CD8-positive, alpha-beta T cell (primary cell): ENCODE measurements at regions of chr1 and their contacts with region 1.

Region 1: DNA sequence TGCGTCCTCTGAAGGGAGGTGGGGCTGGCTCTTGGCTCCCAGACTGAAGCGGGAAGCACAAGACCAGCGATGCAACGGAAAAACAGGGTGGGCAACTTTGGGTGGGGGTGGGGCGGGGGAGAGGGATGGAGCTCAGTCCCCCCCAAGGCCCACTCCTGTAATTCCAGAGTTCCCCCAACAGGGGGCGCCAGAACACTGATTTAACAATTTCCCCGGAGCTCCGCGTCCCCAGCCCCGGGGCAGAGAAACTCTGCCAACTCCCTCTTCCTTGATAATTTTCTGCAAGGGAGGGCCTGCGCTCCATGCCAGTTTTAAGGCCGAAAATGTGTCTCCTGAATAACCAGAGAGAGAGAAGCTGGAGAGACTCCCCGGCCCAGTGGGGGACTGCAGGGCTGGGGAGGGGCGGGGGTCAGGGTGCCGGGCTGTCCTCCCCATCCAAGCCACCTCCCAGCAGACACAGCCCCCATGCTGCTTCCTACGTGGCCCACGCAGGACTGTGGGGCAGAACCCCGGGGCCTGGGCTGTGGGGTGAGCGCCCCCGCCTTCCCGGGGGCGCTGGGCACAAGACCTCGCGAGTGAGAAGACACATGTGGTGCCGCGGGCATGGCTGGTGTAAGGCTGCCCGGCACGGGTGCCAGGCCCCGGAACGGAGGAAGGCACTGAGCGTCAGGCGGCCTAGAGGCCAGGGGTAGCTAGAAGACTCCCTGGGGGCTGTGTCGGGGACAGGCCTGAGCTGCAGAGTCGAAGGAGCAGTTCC is 51.4 kb downstream of the KIF21B start:
- DNase-seq: peak; percentile 49 to 83 (median 66)
- ATAC-seq: peak; percentile 67
- H3K4me3 ChIP-seq: no peak overlapping the region
- H3K4me3 Mint-ChIP-seq: no peak overlapping the region
- H3K27ac ChIP-seq: no peak overlapping the region
- H3K27ac Mint-ChIP-seq: no peak overlapping the region
- H3K4me1 ChIP-seq: no peaks in the 10 kb centered on the region
- H3K4me1 Mint-ChIP-seq: no peaks in the 10 kb centered on the region
- H3K27me3 ChIP-seq: no peaks in the 10 kb centered on the region
- H3K27me3 Mint-ChIP-seq: no peaks in the 10 kb centered on the region
- CTCF ChIP-seq: peak; percentile 97

Region 2: DNA sequence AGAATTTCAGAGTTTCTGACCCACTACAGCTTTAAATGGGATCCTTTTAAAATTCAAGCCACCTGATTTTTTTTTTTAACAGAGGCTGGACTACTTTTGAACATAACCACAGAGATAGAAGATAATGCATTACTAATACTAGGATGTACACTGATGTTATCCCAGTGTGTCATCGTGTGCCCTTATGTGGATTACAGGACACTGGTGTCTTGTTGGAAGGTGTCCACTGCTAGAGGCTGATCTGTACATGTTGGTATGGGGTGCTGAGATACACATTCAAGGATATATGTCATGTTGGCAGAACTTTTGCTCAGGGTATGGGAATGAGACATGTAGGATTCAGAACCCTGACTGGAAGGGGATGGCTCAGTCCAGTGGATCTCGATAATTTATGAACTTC is 21.1 kb before region 1 on chr1:
- CTCF ChIA-PET with region 1: interaction called, 13 read pairs
- POLR2A ChIA-PET with region 1: no interaction called
- intact Hi-C with region 1: no loop called
- DNase-seq: no peak
- ATAC-seq: no peak
- H3K4me3 ChIP-seq: no peak overlapping the region
- H3K4me3 Mint-ChIP-seq: no peak overlapping the region
- H3K27ac ChIP-seq: no peak overlapping the region
- H3K27ac Mint-ChIP-seq: no peak overlapping the region
- H3K4me1 ChIP-seq: no peaks in the 10 kb centered on the region
- H3K4me1 Mint-ChIP-seq: no peaks in the 10 kb centered on the region
- H3K27me3 ChIP-seq: no peaks in the 10 kb centered on the region
- H3K27me3 Mint-ChIP-seq: peaks cover 3% of the 10 kb centered on the region
- CTCF ChIP-seq: no peak

Region 3: DNA sequence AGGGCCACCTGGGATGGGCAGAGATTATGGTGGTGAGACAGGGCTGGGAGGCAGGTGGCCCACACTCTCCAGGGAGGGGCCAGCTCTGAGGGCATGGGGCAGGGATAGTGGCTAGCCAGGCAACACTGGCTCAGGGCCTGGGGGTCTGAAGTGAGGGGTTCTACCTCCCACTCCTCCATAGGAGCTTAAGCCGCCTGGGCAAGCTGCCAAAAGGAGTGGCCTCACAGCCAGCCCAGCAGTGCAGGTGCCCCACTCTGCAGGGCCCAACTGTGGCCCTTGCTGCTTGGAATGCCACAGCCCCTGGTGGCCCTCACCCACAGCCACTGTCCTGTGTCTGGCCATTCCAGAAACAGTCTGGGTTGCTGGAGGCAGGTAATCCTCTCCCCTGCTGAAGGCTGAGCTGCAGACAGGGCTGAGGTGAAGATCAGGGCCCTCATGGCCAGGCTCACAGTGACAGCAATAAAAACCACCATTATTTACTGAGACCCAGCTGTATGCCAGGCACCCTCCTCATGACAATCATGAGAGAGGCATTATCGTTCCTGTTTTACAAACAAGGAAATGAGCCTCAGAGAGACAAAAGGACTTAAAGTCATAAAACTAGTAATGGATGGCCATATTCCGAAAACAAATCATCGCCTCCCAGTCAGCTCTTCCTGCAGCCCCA is 20.4 kb after region 1 on chr1:
- CTCF ChIA-PET with region 1: interaction called, 20 read pairs
- POLR2A ChIA-PET with region 1: no interaction called
- intact Hi-C with region 1: no loop called
- DNase-seq: no peak
- ATAC-seq: no peak
- H3K4me3 ChIP-seq: no peak overlapping the region
- H3K4me3 Mint-ChIP-seq: no peak overlapping the region
- H3K27ac ChIP-seq: no peak overlapping the region
- H3K27ac Mint-ChIP-seq: no peak overlapping the region
- H3K4me1 ChIP-seq: no peaks in the 10 kb centered on the region
- H3K4me1 Mint-ChIP-seq: no peaks in the 10 kb centered on the region
- H3K27me3 ChIP-seq: no peaks in the 10 kb centered on the region
- H3K27me3 Mint-ChIP-seq: no peaks in the 10 kb centered on the region
- CTCF ChIP-seq: no peak

Region 4: DNA sequence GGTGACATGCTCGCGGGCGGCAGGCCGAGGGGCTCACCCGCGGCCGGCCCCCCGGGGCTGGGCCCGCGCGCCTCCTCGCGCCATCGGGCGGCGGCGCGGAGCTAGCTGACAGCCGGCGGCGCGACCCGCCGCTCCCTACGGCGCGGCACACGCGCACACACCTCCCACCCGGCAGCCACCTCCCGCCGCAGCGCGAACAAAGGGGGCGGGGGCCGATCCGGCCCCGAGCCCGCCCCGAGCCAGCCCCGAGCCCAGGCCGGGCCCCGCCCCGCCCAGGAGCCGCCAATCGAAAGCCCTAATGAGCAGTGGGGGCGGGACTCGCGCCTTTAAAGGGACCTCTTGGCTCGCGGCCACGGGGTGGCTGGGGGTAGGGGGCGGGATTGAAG is 51.4 kb after region 1 on chr1 and contains the start of gene KIF21B:
- CTCF ChIA-PET with region 1: interaction called, 69 read pairs
- POLR2A ChIA-PET with region 1: no interaction called
- intact Hi-C with region 1: loop called in 1 of 2 experiments (anchors 1 kb)
- DNase-seq: peak; percentile 87 to 95 (median 91)
- ATAC-seq: peak; percentile 80
- H3K4me3 ChIP-seq: peak within 1 kb of the TSS; percentile 64 to 73
- H3K4me3 Mint-ChIP-seq: peak within 1 kb of the TSS; percentile 94
- H3K27ac ChIP-seq: peak within 1 kb of the TSS; percentile 62 to 73
- H3K27ac Mint-ChIP-seq: peak within 1 kb of the TSS; percentile 99
- H3K4me1 ChIP-seq: peaks cover 56% of the 10 kb centered on the region
- H3K4me1 Mint-ChIP-seq: peaks cover 71% of the 10 kb centered on the region
- H3K27me3 ChIP-seq: no peaks in the 10 kb centered on the region
- H3K27me3 Mint-ChIP-seq: no peaks in the 10 kb centered on the region
- CTCF ChIP-seq: no peak
- total RNA-seq, gene KIF21B: 62.2 to 63.5 TPM

Region 5: DNA sequence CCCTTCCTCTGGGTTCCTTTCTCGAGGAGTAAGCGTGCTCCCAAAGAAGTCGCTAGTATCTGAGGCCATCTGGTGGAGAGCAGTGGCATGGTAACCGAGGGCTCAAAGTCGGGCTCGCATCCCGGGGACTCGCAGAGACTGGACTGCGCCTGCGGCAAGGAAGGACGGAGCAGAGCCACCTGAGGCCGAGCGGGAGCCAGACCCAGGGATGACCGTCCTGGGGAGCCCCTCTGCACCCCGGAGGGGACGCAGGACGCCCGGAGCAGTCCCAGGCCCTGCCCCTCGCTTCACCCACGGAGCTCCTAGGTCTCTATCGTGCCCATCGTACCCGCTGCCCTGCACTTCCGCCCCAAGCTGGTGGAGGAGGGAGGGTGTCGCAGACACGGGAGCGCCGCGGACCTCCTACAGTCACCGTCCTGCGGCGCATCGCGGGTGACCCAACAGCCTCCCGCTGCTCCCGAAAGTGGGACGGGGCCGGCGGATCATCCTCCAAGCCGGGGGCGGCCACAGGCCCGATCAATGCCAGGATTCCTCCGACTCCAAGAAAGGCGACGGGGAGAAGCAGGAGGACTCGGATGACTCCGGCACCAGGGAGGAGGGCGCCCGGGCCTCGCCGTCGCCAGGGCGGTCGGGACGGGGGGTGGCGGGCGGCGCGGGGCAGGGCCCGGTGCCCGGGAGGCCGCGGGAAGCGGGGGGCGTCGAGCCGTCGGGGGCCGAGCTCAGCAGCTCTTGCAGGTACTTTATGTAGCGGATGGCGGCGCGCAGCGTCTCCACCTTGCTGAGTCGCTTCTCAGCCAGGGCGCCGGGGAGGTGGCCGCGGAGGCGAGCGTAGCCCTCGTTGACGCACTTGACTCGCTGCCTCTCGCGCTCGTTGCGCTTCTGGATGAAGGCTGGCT is 142.4 kb after region 1 on chr1:
- CTCF ChIA-PET with region 1: interaction called, 30 read pairs
- POLR2A ChIA-PET with region 1: interaction called, 3 read pairs
- intact Hi-C with region 1: loop called (anchors 1 to 2 kb)
- DNase-seq: peak; percentile 47 to 85 (median 71)
- ATAC-seq: peak; percentile 80
- H3K4me3 ChIP-seq: peak overlapping the region; percentile 67 to 87
- H3K4me3 Mint-ChIP-seq: peak overlapping the region; percentile 91
- H3K27ac ChIP-seq: peak overlapping the region; percentile 40 to 51
- H3K27ac Mint-ChIP-seq: peak overlapping the region; percentile 90
- H3K4me1 ChIP-seq: peaks cover 13% of the 10 kb centered on the region
- H3K4me1 Mint-ChIP-seq: peaks cover 29% of the 10 kb centered on the region
- H3K27me3 ChIP-seq: no peaks in the 10 kb centered on the region
- H3K27me3 Mint-ChIP-seq: no peaks in the 10 kb centered on the region
- CTCF ChIP-seq: peak; percentile 72

Region 6: DNA sequence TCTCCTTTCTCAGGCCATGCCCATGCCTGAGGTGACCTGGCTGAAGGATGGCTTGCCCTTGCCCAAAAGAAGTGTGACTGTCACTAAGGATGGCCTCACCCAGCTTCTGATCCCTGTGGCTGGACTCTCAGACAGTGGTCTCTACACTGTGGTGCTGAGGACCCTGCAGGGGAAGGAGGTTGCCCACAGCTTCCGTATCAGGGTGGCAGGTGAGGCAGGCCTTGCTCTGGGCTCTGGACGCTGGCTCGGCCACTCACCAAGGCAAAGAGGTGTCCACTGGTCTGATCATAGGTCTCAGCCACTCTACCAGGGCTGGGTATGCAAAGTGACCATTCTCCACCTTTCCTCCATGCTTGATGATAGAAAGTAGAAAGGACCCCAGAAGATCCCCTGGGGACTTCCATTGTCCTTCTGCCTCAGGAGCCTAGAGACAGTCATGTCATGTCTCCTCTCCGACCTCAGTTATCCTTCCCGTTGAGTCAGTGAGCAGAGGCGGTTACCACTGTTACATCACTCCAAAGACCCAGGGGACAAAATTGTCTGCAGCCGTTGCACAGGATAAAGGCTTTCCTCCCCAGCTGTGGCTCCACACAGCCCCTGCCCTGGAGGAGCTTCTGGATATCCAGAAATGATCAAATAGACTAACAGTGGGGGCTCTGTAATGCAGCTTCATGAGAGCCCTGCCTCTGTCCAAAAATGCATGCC is 252.7 kb after region 1 on chr1:
- CTCF ChIA-PET with region 1: interaction called, 3 read pairs
- POLR2A ChIA-PET with region 1: no interaction called
- intact Hi-C with region 1: loop called in 1 of 2 experiments (anchors 5 kb)
- DNase-seq: peak in 1 of 9 experiments; percentile 29
- ATAC-seq: no peak
- H3K4me3 ChIP-seq: no peak overlapping the region
- H3K4me3 Mint-ChIP-seq: no peak overlapping the region
- H3K27ac ChIP-seq: no peak overlapping the region
- H3K27ac Mint-ChIP-seq: no peak overlapping the region
- H3K4me1 ChIP-seq: no peaks in the 10 kb centered on the region
- H3K4me1 Mint-ChIP-seq: no peaks in the 10 kb centered on the region
- H3K27me3 ChIP-seq: no peaks in the 10 kb centered on the region
- H3K27me3 Mint-ChIP-seq: peaks cover 7% of the 10 kb centered on the region
- CTCF ChIP-seq: no peak